Esophagus muscularis mucosa (tissue), 4 donors: ENCODE measurements at regions of chr10 and their contacts with region 1.

Region 1: DNA sequence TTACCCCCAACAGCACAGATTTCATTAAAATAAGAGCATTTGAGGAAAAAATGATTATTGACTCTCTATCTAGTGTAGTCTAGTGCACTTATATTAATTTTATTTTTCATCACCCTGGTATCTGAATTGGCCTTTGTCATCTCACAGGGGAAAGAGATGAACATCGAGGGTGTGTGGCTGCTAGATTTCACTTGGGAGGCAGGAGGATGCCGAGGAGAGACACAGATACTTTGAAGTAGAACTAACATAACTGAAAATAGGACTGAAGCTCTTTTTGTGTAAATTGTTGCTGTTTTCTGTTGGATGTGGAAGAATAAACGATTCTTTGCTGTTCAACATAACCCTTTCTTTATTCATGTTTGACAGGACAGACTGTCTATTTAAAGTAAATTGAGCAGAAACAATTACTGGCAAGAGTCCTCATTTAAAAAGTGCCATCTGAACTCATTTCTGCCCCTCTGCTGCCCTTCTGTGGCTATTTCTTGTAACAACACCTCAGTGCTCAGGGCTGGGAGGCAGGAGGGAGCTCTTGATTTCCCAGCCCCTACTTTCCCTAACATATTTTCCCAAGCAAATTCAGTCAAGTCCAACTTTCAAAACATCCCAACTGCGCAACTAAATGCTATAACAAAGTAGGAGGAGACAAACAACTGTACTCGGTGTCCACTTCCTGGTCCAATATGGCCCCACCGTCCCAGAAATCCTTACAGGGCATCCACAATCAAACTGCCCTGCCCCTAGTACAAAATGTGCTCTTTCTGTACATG is 15.6 kb downstream of the LYZL1 start:
- DNase-seq: peak; percentile 91
- H3K4me3 ChIP-seq: peak overlapping the region in 1 of 4 donors; percentile 13
- H3K27ac ChIP-seq: no peak overlapping the region
- H3K4me1 ChIP-seq: peaks cover 0 to 10% (median 8%) of the 10 kb centered on the region in 4 donors
- H3K27me3 ChIP-seq: no peaks in the 10 kb centered on the region
- CTCF ChIP-seq: peak; percentile 81 to 87 (median 82)
- EP300 ChIP-seq: no peak
- POLR2A ChIP-seq: no peak

Region 2: GRCh38 chr10:28628184-28628893 is 676.1 kb before region 1 on chr10:
- intact Hi-C with region 1: loop called (anchors 10 kb)
- DNase-seq: no peak
- H3K4me3 ChIP-seq: no peak overlapping the region
- H3K27ac ChIP-seq: no peak overlapping the region
- H3K4me1 ChIP-seq: peaks cover 0 to 9% (median 8%) of the 10 kb centered on the region in 4 donors
- H3K27me3 ChIP-seq: peaks cover 0 to 27% (median 2%) of the 10 kb centered on the region in 4 donors
- CTCF ChIP-seq: peak; percentile 72 to 88 (median 85)
- EP300 ChIP-seq: no peak
- POLR2A ChIP-seq: no peak

Region 3: GRCh38 chr10:28663576-28664313 is 640.7 kb before region 1 on chr10:
- intact Hi-C with region 1: loop called (anchors 5 kb)
- DNase-seq: no peak
- H3K4me3 ChIP-seq: no peak overlapping the region
- H3K27ac ChIP-seq: no peak overlapping the region
- H3K4me1 ChIP-seq: peaks cover 0 to 18% (median 8%) of the 10 kb centered on the region in 4 donors
- H3K27me3 ChIP-seq: peaks cover 0 to 21% (median 5%) of the 10 kb centered on the region in 4 donors
- CTCF ChIP-seq: peak; percentile 92 to 97 (median 94)
- EP300 ChIP-seq: no peak
- POLR2A ChIP-seq: no peak

Region 4: DNA sequence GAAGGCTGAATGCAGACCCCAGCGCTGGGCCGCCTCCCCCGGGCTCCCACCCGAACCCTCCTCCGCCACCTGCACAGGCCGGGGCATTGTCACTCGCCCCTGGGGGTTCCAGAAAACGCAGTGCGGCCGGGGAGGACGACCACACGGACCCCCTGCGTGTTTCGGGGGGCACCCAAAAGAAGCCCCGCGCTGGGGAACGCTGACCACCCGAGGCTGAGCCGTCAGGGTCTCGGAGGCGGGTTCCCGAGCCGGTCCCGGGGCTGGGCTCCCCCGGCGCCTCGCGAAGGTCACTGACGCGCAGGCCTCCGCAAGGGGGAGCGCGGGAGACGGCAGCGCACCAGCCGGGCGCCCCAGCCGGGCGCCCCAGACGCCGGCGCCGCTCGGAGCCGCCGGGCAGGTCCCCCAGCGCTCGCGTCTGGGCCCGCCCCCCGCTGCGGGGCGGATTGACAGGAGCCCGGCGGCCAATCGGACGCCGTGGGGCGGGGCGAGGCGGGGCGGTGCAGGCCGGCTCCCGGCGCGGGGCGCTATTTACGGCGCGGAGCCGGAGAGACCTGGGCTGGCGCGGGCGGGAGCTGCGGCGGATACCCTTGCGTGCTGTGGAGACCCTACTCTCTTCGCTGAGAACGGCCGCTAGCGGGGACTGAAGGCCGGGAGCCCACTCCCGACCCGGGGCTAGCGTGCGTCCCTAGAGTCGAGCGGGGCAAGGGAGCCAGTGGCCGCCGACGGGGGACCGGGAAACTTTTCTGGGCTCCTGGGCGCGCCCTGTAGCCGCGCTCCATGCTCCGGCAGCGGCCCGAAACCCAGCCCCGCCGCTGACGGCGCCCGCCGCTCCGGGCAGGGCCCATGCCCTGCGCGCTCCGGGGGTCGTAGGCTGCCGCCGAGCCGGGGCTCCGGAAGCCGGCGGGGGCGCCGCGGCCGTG is 627.2 kb before region 1 on chr10 and contains the start of gene BAMBI:
- intact Hi-C with region 1: loop called (anchors 5 kb)
- DNase-seq: peak; percentile 94
- H3K4me3 ChIP-seq: peak within 1 kb of the TSS; percentile 77 to 85 (median 81)
- H3K27ac ChIP-seq: peak within 1 kb of the TSS; percentile 58 to 74 (median 70)
- H3K4me1 ChIP-seq: peaks cover 23 to 39% (median 32%) of the 10 kb centered on the region in 4 donors
- H3K27me3 ChIP-seq: peaks cover 0 to 52% (median 0%) of the 10 kb centered on the region in 4 donors
- CTCF ChIP-seq: peak; percentile 59 to 76 (median 61)
- EP300 ChIP-seq: no peak
- POLR2A ChIP-seq: peak; percentile 69
- total RNA-seq, gene BAMBI: 6.2 to 8.4 (median 8.1) TPM